ENCODE measurements at regions of chrX and their contacts with region 1.

Region 1: GRCh38 chrX:102599084-102599950 is at the start of gene ARMCX5:
- DNase-seq: peak; percentile 79
- H3K4me3 Mint-ChIP-seq: peak within 1 kb of the TSS; percentile 100
- H3K27ac Mint-ChIP-seq: peak within 1 kb of the TSS; percentile 96
- H3K4me1 Mint-ChIP-seq: peaks cover 33% of the 10 kb centered on the region
- H3K27me3 Mint-ChIP-seq: no peaks in the 10 kb centered on the region
- total RNA-seq, gene ARMCX5: 9.5 to 11.4 TPM

Region 2: GRCh38 chrX:101931488-101932248 is 667.6 kb before region 1 on chrX and contains the start of gene ZMAT1:
- CTCF ChIA-PET with region 1: no interaction called
- intact Hi-C with region 1: loop called (anchors 2 kb)
- DNase-seq: peak; percentile 96
- H3K4me3 Mint-ChIP-seq: peak within 1 kb of the TSS; percentile 92
- H3K27ac Mint-ChIP-seq: peak within 1 kb of the TSS; percentile 91
- H3K4me1 Mint-ChIP-seq: peaks cover 11% of the 10 kb centered on the region
- H3K27me3 Mint-ChIP-seq: no peaks in the 10 kb centered on the region
- total RNA-seq, gene ZMAT1: 2.7 to 2.8 TPM

Region 3: DNA sequence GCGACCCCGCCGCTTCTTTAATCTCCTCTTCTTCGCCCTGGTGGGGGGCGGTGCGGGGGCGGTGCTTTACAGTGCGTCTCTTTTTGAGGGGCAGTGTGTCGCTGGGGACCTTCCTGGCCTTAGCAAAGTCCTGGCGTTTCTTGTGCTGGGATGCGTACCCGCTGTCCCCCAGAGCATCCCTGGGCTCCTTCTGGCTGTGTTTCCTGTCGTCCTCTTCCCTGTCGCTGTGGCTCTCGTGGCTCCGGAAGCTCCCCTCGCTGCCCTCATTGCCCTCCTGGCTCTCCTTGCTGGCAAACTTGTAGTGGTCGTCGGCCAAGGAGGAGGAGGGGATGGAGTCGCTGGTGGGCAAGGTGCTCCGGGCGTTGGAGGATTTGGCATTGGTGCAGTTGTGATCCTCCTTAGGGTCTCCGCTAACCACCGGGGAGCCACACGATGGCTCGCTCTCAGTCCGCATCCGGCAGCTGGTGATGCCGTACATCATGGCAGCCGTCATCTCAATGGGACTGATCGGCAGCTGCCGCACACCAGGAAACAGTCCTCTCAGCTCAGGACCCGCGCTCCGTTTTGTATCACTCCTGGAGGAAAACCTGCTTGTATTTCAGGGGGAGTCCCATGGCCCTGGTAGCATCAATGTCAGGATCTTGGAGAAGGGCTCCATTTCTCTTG is 52.4 kb before region 1 on chrX:
- CTCF ChIA-PET with region 1: no interaction called
- intact Hi-C with region 1: loop called (anchors 10 kb)
- DNase-seq: peak; percentile 29
- H3K4me3 Mint-ChIP-seq: peak overlapping the region; percentile 69
- H3K27ac Mint-ChIP-seq: no peak overlapping the region
- H3K4me1 Mint-ChIP-seq: no peaks in the 10 kb centered on the region
- H3K27me3 Mint-ChIP-seq: peaks cover 8% of the 10 kb centered on the region

Region 4: DNA sequence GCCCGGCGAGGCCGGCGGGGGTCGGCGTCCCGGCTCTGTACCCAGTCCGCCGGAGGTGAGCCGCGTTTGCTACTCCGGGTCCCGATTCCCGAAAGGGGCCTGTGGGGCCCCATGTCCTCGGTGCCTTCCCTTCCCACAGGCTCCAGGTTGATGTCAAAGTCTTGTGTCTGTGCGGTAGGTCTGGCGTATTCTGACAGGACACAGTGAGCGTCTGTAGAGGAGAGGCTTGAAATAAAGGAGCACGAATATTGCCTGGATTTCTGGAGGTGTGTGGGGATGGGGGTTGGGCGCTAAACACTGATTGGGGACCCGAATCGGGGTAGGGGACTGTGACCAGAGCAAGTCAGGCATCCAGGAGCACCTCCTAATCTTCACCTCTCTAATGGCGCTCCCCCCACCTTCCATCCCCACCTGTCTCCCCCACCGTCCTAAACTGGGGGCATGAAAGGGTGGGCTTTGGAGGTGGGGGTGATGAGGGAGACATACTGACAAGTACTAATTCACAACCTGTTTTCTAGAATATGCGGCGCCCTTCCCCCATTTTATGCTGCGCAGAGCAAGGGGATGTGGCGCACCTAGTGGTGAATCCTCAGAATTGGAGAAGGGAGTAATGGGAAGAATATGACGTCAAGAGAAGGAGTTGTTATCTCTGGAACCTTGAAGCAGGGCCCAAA is 113.8 kb after region 1 on chrX:
- CTCF ChIA-PET with region 1: no interaction called
- intact Hi-C with region 1: loop called (anchors 5 kb)
- DNase-seq: peak; percentile 38
- H3K4me3 Mint-ChIP-seq: peak overlapping the region; percentile 79
- H3K27ac Mint-ChIP-seq: no peak overlapping the region
- H3K4me1 Mint-ChIP-seq: peaks cover 11% of the 10 kb centered on the region
- H3K27me3 Mint-ChIP-seq: peaks cover 7% of the 10 kb centered on the region

Region 5: DNA sequence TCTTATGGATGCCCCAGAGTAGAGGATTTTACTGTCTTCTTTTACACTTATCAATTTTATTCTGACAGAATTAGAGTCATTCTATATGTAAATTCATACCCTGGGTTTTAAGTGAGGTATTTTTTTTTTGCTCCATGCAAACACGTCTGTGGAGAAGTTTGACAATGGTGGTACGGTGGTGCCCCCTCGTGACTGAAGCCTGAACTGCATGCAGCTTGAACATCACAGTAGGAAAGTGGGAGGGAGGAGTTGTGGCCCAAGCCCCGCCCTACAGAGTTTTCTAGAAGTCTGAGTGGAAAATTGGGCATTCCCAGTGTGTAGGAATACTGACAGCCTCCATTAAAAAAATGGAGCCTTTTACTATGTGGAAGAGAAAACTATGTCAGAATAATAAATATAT is 264.4 kb after region 1 on chrX:
- CTCF ChIA-PET with region 1: no interaction called
- intact Hi-C with region 1: loop called (anchors 2 kb)
- DNase-seq: peak; percentile 90
- H3K4me3 Mint-ChIP-seq: no peak overlapping the region
- H3K27ac Mint-ChIP-seq: no peak overlapping the region
- H3K4me1 Mint-ChIP-seq: no peaks in the 10 kb centered on the region
- H3K27me3 Mint-ChIP-seq: no peaks in the 10 kb centered on the region

Measured in activated naive CD4-positive, alpha-beta T cell treated with anti-CD3 and anti-CD28 coated beads for 36 hours (primary cell).